ENCODE measurements at regions of chr4 and their contacts with region 1.

Region 1: DNA sequence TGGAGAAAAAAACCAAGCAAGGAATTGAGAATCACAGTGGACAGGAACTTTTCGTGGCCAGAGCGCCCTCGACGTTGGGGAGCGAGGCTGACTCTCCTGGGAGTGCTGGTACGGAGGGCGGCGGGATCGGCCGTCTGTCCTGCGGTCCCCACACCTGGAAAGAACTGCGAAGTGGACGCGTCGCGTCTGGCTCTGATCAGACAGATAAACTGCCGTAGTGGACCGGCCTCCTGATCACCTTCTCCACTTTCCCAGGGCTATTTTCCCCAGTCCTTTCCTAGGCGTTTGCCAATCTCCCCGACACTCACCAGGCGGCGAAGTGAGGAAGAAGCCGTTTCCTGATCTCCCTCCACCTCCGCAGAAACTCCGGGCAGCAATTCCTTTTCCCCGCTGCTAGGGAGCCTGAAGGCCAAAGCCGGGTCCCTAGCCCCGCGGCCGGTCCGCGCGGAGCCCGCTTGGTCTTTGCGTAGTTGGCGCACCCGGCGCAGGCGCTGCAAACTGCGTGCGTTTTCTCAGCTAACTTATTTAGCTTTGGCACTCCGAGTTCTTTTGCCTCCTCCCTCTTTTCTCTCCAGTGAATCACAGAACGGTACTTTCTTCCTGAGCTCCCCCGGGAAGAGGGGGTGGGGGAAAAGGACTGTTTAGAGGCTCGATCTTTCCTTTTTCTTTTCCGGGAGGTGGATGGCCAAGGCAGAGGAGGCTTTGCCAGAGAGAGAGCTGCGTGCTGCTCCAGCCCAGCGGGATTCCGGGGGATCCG is at the start of gene ARSJ:
- DNase-seq: peak; percentile 28 to 51
- H3K4me3 ChIP-seq: peak within 1 kb of the TSS; percentile 55 to 88 (median 68)
- H3K27ac ChIP-seq: peak within 1 kb of the TSS; percentile 87 to 95
- H3K4me1 ChIP-seq: no peaks in the 10 kb centered on the region
- H3K27me3 ChIP-seq: no peaks in the 10 kb centered on the region
- CTCF ChIP-seq: no peak
- POLR2A ChIP-seq: peak; percentile 45
- total RNA-seq, gene ARSJ: 1.1 to 10.7 (median 8.8) TPM

Region 2: GRCh38 chr4:112231779-112232713 is 1747.3 kb before region 1 on chr4 and contains the start of gene AP1AR:
- intact Hi-C with region 1: loop called (anchors 10 kb)
- DNase-seq: peak; percentile 65 to 80
- H3K4me3 ChIP-seq: peak within 1 kb of the TSS; percentile 61 to 100 (median 75)
- H3K27ac ChIP-seq: peak within 1 kb of the TSS; percentile 89 to 99
- H3K4me1 ChIP-seq: peaks cover 0 to 3% of the 10 kb centered on the region in 2 donors
- H3K27me3 ChIP-seq: no peaks in the 10 kb centered on the region
- CTCF ChIP-seq: peak in 1 of 3 donors; percentile 27
- POLR2A ChIP-seq: peak; percentile 10
- total RNA-seq, gene AP1AR: 20.2 to 36.1 (median 23.6) TPM

Region 3: GRCh38 chr4:114677346-114677979 is 698.1 kb after region 1 on chr4:
- intact Hi-C with region 1: no loop called
- DNase-seq: no peak
- H3K4me3 ChIP-seq: no peak overlapping the region
- H3K27ac ChIP-seq: no peak overlapping the region
- H3K4me1 ChIP-seq: no peaks in the 10 kb centered on the region
- H3K27me3 ChIP-seq: no peaks in the 10 kb centered on the region
- CTCF ChIP-seq: no peak
- POLR2A ChIP-seq: no peak